B cell (primary cell): ENCODE measurements at regions of chr7 and their contacts with region 1.

Region 1: GRCh38 chr7:128739048-128739962 is at the start of gene CALU:
- DNase-seq: peak; percentile 93
- ATAC-seq: peak; percentile 96
- H3K4me3 ChIP-seq: peak within 1 kb of the TSS; percentile 58 to 96 (median 88)
- H3K4me3 Mint-ChIP-seq: peak within 1 kb of the TSS; percentile 100
- H3K27ac ChIP-seq: peak within 1 kb of the TSS; percentile 67 to 83
- H3K27ac Mint-ChIP-seq: peak within 1 kb of the TSS; percentile 93
- H3K4me1 ChIP-seq: peaks cover 34 to 48% of the 10 kb centered on the region in 2 donors
- H3K4me1 Mint-ChIP-seq: peaks cover 41% of the 10 kb centered on the region
- H3K27me3 ChIP-seq: no peaks in the 10 kb centered on the region
- H3K27me3 Mint-ChIP-seq: no peaks in the 10 kb centered on the region
- CTCF ChIP-seq: no peak
- total RNA-seq, gene CALU: 11.2 and 12.4 TPM in 2 replicates

Region 2: GRCh38 chr7:127585044-127585953 is 1154.0 kb before region 1 on chr7 and contains the start of gene GCC1:
- CTCF ChIA-PET with region 1: no interaction called
- POLR2A ChIA-PET with region 1: no interaction called
- intact Hi-C with region 1: loop called (anchors 5 kb)
- DNase-seq: peak; percentile 95
- ATAC-seq: peak; percentile 80
- H3K4me3 ChIP-seq: peak within 1 kb of the TSS; percentile 84 to 97 (median 95)
- H3K4me3 Mint-ChIP-seq: peak within 1 kb of the TSS; percentile 89
- H3K27ac ChIP-seq: peak within 1 kb of the TSS; percentile 55 to 89
- H3K27ac Mint-ChIP-seq: peak within 1 kb of the TSS; percentile 89
- H3K4me1 ChIP-seq: peaks cover 45 to 54% of the 10 kb centered on the region in 2 donors
- H3K4me1 Mint-ChIP-seq: peaks cover 73% of the 10 kb centered on the region
- H3K27me3 ChIP-seq: no peaks in the 10 kb centered on the region
- H3K27me3 Mint-ChIP-seq: no peaks in the 10 kb centered on the region
- CTCF ChIP-seq: no peak
- total RNA-seq, gene GCC1: 25.5 and 26.4 TPM in 2 replicates

Region 3: GRCh38 chr7:128343554-128344430 is 395.5 kb before region 1 on chr7 and contains the start of gene RBM28:
- CTCF ChIA-PET with region 1: no interaction called
- POLR2A ChIA-PET with region 1: no interaction called
- intact Hi-C with region 1: loop called (anchors 5 kb)
- DNase-seq: peak; percentile 95
- ATAC-seq: peak; percentile 95
- H3K4me3 ChIP-seq: peak within 1 kb of the TSS; percentile 75 to 91 (median 81)
- H3K4me3 Mint-ChIP-seq: peak within 1 kb of the TSS; percentile 98
- H3K27ac ChIP-seq: peak within 1 kb of the TSS; percentile 71 to 76
- H3K27ac Mint-ChIP-seq: peak within 1 kb of the TSS; percentile 96
- H3K4me1 ChIP-seq: peaks cover 15 to 19% of the 10 kb centered on the region in 2 donors
- H3K4me1 Mint-ChIP-seq: peaks cover 28% of the 10 kb centered on the region
- H3K27me3 ChIP-seq: peaks cover 0 to 11% (median 1%) of the 10 kb centered on the region in 4 experiments
- H3K27me3 Mint-ChIP-seq: peaks cover 14% of the 10 kb centered on the region
- CTCF ChIP-seq: no peak
- total RNA-seq, gene RBM28: 46.2 and 52.8 TPM in 2 replicates

Region 4: DNA sequence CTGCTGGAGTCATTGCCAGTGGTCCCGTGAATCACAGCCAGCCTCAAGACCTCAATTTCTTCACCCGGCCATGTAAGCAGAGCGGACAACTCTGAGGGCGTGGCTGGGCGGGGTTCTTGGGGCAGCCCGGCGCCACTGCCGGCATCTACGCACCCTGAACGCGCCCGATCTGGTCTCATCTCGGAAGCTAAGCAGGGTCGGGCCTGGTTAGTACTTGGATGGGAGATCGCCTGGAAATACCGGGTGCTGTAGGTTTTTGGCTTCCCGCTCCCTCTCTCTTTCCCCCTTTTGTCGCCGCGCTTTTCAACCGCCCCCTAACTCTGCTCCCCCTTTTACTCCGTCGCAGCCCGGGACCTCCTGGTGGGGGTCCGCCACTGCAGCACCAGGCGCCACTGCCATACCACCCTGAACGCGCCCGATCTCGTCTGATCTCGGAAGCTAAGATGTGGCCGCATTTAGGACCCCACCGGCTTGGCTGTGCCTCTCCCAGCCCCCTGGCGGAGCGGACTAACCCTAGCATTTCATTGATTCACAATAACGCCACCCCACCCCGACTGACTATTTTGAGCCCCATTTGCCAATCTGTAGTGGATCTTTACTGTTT is 41.9 kb before region 1 on chr7:
- CTCF ChIA-PET with region 1: no interaction called
- POLR2A ChIA-PET with region 1: no interaction called
- intact Hi-C with region 1: loop called (anchors 1 kb)
- DNase-seq: peak; percentile 77
- ATAC-seq: peak; percentile 71
- H3K4me3 ChIP-seq: peak overlapping the region in 4 of 5 experiments; percentile 26 to 50 (median 40)
- H3K4me3 Mint-ChIP-seq: peak overlapping the region; percentile 86
- H3K27ac ChIP-seq: no peak overlapping the region
- H3K27ac Mint-ChIP-seq: peak overlapping the region; percentile 42
- H3K4me1 ChIP-seq: peaks cover 10 to 17% of the 10 kb centered on the region in 2 donors
- H3K4me1 Mint-ChIP-seq: peaks cover 14% of the 10 kb centered on the region
- H3K27me3 ChIP-seq: peaks cover 0 to 48% (median 37%) of the 10 kb centered on the region in 4 experiments
- H3K27me3 Mint-ChIP-seq: peaks cover 56% of the 10 kb centered on the region
- CTCF ChIP-seq: no peak

Region 5: DNA sequence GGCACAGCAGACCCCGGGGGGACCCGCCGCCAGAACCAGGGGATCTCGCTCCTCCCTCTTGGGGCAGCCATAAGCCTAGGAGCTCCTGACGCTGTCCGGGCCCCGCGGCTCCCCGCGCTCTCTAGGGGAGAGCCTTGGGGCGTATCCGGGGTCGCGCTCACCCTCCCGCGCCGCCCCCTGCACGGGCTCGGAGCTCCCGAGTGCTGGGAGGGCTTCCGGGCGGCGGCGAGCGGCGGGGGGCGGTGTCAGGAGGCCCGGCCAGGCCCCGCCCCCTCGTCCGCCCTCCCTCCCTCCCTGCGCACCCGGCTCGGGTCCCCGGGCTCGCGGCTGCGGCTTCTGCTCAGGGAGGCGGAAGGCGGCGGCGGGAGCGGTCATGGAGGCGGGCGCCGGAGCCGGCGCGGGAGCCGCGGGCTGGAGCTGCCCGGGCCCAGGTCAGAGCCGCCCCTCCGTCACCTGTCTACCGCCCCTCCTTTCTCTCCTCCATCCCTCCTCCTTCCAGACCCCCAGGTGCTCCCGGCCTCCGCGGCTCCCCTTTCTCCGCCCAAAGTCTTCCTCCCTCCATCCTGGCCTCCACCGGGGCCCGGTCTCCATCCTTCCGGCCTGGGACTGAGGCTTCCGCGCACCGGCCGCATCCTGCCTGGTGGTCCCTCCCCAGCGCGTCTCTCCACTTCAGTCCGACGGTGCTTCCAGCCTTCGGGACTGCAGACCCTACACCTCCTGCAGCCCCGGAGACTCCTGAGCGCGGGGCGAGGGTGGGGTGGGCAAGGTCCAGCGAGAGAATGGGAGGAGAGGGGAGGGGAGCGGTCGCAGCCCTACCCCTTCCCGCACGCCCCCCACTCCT is 52.0 kb after region 1 on chr7:
- CTCF ChIA-PET with region 1: no interaction called
- POLR2A ChIA-PET with region 1: interaction called, 3 read pairs
- intact Hi-C with region 1: loop called (anchors 1 kb)
- DNase-seq: peak; percentile 83
- ATAC-seq: peak; percentile 89
- H3K4me3 ChIP-seq: peak overlapping the region; percentile 38 to 87 (median 71)
- H3K4me3 Mint-ChIP-seq: peak overlapping the region; percentile 84
- H3K27ac ChIP-seq: no peak overlapping the region
- H3K27ac Mint-ChIP-seq: no peak overlapping the region
- H3K4me1 ChIP-seq: peaks cover 9 to 15% of the 10 kb centered on the region in 2 donors
- H3K4me1 Mint-ChIP-seq: peaks cover 9% of the 10 kb centered on the region
- H3K27me3 ChIP-seq: no peaks in the 10 kb centered on the region
- H3K27me3 Mint-ChIP-seq: no peaks in the 10 kb centered on the region
- CTCF ChIP-seq: no peak